Activated naive CD8-positive, alpha-beta T cell treated with anti-CD3 and anti-CD28 coated beads, Interleukin-2, amount 10 ng/mL, durations not matched to agents 7 days and 5 days (primary cell): ENCODE measurements at regions of chr2 and their contacts with region 1.

Region 1: DNA sequence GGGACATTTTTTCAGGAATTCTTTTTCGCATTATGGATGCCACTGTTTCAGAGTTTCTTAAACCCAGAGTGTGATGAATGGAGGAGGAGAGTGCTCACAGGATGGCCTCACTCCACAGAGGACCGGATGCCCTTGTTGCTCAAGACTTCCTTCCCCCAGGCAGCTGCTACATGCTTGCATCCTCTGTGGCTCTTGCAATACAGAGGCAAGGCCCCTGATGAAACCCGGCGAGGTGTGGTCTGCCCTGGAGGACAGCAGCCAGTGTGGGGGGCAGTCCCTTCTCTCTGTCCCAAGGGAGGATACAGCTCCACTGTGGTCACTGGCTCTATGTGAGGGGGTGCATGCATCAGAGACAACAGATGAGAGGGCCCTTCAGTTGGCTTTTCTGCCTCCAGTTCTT is 109.6 kb downstream of the SH3RF3 start:
- DNase-seq: peak; percentile 64
- ATAC-seq: peak; percentile 100
- H3K4me3 Mint-ChIP-seq: peak overlapping the region; percentile 74
- H3K27ac Mint-ChIP-seq: peak overlapping the region; percentile 95
- H3K4me1 Mint-ChIP-seq: peaks cover 20% of the 10 kb centered on the region
- H3K27me3 Mint-ChIP-seq: peaks cover 2% of the 10 kb centered on the region

Region 2: DNA sequence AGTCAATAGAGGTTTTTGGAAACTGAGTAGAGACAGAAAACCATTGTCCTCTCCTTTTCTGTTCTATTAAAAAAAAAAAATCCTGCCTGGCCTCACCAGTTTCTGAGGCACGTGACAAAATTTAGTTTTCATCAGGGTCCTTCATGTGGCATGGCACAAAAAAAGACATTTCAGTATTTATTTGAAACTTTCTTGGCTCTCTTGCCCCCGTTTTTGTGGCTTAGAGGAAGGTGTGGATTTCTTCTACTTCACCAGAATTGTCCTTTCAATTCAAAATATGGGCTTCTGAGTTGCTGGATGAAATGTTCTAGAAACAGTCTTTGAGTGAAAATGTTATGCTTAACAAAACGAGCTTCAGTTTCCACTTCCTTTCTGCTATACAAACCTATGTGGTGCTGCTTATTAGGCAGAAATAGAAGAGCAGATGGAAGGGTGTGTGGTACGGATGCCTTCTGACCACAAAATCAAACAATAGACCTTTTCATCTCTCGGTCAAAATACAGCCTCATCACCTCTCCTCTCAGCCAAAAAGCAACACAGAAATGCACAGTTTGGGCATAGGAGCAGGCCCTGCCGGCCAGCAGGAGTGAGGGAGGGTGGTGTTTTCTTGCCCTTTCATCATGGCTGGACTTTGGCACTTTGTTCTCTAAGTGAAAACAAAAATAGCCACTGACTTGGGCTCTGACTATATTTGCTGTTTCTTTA is 20.3 kb before region 1 on chr2:
- POLR2A ChIA-PET with region 1: interaction called, 10 read pairs
- DNase-seq: no peak
- ATAC-seq: peak; percentile 9
- H3K4me3 Mint-ChIP-seq: peak overlapping the region; percentile 51
- H3K27ac Mint-ChIP-seq: peak overlapping the region; percentile 31
- H3K4me1 Mint-ChIP-seq: peaks cover 44% of the 10 kb centered on the region
- H3K27me3 Mint-ChIP-seq: peaks cover 48% of the 10 kb centered on the region

Region 3: DNA sequence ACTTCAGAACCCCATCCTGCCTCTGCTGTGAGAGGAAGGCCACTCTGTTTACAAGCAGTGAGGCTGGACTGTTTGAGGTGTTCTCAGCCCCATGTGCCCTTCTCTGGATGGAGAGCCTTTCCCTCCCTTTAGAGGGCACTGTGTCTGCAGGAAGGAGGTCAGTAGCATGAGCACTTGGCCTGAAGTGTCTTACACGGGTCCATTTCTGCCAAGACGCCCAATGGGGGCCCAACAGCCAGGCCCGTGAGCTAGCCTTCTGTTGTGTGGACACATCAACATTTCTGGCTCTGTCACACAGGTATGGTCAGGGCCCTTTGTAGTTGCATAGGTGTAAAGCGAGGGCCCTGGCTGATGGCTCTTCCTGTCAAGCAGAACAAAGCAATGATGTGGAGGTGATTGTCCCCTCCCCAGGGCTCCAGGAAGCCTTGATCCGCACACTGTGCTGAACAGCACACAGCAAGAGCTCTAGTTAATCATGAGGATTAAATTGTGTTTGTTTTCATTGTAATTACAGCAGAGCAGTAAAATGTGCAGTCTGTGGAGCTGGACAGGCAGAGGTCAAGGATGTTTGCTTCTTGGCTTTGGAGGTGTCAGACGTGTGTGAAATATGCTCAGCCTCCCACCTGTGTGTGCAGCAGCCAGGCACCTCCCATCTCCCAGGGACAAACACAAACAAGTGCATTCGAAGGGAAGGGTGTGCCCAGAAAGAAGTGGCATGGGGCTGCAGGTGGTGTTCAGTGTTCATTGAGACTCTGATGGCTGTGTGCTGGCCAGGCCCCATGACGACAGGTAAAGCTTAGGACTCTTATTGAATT is 22.5 kb after region 1 on chr2:
- POLR2A ChIA-PET with region 1: no interaction called
- DNase-seq: no peak
- ATAC-seq: peak; percentile 45
- H3K4me3 Mint-ChIP-seq: no peak overlapping the region
- H3K27ac Mint-ChIP-seq: no peak overlapping the region
- H3K4me1 Mint-ChIP-seq: peaks cover 2% of the 10 kb centered on the region
- H3K27me3 Mint-ChIP-seq: peaks cover 3% of the 10 kb centered on the region